HepG2 (cell line): ENCODE measurements at regions of chr2 and their contacts with region 1.

Region 1: GRCh38 chr2:182522405-182522896 is 95.6 kb upstream of the PDE1A start:
- DNase-seq: no peak
- ATAC-seq: no peak
- H3K4me3 ChIP-seq: no peak overlapping the region
- H3K27ac ChIP-seq: no peak overlapping the region
- H3K4me1 ChIP-seq: no peaks in the 10 kb centered on the region
- H3K27me3 ChIP-seq: no peaks in the 10 kb centered on the region
- CTCF ChIP-seq: no peak
- EP300 ChIP-seq: no peak
- POLR2A ChIP-seq: no peak
- RAD21 ChIP-seq: no peak

Region 2: DNA sequence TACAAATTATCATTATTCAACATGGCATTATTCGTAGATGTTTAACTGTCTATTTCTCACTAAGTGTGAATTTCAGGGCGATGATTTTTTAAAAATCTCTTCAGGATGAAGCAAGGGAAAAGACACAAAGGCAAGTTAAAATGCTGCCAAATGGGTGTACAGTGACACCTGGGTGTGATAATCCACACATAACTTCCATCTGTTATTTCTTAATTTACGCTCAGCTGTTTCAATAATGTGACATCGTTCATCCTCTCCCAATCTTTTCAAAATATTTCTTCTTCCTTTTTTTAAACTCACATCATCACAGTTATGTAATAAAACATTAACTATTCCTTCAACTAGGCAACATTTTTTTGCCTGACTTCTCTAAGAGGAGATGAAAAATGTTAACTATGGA is 106.3 kb before region 1 on chr2:
- CTCF ChIA-PET with region 1: no interaction called
- POLR2A ChIA-PET with region 1: no interaction called
- in situ Hi-C with region 1: no loop called
- intact Hi-C with region 1: no loop called
- DNase-seq: no peak
- ATAC-seq: no peak
- H3K4me3 ChIP-seq: no peak overlapping the region
- H3K27ac ChIP-seq: no peak overlapping the region
- H3K4me1 ChIP-seq: no peaks in the 10 kb centered on the region
- H3K27me3 ChIP-seq: no peaks in the 10 kb centered on the region
- CTCF ChIP-seq: no peak
- EP300 ChIP-seq: no peak
- POLR2A ChIP-seq: no peak
- RAD21 ChIP-seq: no peak

Region 3: DNA sequence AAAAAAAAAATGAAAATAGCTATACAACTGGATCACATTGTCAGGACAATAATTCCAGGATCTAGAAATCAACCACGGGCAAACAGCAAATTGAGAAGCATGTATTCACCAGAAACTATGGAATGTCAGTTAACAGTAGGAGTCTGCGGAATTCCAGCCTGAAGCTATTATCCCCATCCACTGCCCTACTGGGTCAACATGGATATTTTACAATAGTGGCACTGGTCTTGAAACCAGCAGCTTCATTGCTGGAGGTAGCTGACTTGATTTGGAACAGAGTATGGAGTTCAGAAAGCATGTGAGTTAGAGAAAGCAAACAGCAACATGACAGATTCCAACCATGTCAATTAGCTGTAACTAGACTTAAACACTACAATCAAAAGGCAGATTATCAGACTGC is 39.9 kb before region 1 on chr2:
- CTCF ChIA-PET with region 1: no interaction called
- POLR2A ChIA-PET with region 1: no interaction called
- in situ Hi-C with region 1: no loop called
- intact Hi-C with region 1: loop called (anchors 2 kb)
- DNase-seq: no peak
- ATAC-seq: no peak
- H3K4me3 ChIP-seq: no peak overlapping the region
- H3K27ac ChIP-seq: no peak overlapping the region
- H3K4me1 ChIP-seq: no peaks in the 10 kb centered on the region
- H3K27me3 ChIP-seq: no peaks in the 10 kb centered on the region
- CTCF ChIP-seq: no peak
- EP300 ChIP-seq: no peak
- POLR2A ChIP-seq: no peak
- RAD21 ChIP-seq: no peak